Upper lobe of right lung (tissue), 1 donor: ENCODE measurements at regions of chr2 and their contacts with region 1.

Region 1: GRCh38 chr2:68849579-68850030 is 21.6 kb downstream of the BMP10 start:
- DNase-seq: no peak
- ATAC-seq: no peak
- H3K4me3 ChIP-seq: no peak overlapping the region
- H3K27ac ChIP-seq: no peak overlapping the region
- H3K4me1 ChIP-seq: no peaks in the 10 kb centered on the region
- H3K27me3 ChIP-seq: no peaks in the 10 kb centered on the region
- CTCF ChIP-seq: no peak

Region 2: DNA sequence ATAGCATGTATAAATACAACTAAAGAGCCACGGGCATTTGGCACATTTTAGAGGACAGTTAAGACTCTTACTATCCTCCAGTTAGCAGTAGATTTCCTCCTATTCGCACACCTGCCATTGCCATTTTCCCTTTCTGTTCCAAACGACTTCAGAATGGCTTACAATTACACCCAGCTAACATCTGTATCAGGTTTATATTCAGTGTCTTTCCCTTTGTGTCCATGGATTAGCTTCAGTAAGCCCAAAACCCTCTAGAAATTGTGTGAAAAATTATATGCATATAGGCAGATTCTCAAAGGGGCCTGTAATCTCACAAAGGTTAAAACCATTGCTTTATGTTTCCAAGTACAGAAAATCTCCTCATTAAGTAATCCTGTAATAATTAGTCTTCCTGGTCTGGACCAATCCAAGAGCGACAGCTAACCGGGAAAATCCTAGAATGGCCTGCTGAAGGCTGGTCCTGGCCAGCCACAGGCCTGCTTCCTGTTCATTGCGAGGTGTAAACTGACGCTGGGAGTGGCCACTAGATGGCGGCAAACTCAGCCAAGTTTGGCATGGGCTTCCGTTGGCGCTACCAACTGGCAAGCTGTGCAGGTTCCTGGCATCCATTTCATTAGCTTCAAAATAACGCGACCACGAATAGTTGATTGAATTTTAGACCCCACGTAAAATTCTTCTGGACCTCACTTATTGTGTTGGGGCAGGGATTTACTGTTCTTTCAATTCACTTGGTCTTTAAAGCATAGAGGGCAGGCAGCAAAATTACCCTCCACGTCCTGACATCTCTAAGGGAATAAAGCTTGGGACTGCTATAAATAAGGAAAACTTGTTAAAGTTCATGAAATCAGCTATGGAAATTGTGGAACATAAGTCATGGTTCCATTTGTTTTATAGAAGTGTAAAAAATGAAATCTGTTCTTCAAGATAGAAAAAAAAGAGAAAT is 97.9 kb before region 1 on chr2:
- intact Hi-C with region 1: no loop called
- DNase-seq: peak; percentile 94
- ATAC-seq: peak; percentile 98
- H3K4me3 ChIP-seq: no peak overlapping the region
- H3K27ac ChIP-seq: peak overlapping the region; percentile 14
- H3K4me1 ChIP-seq: peaks cover 45% of the 10 kb centered on the region
- H3K27me3 ChIP-seq: no peaks in the 10 kb centered on the region
- CTCF ChIP-seq: peak; percentile 96

Region 3: GRCh38 chr2:68909793-68910674 is 60.4 kb after region 1 on chr2:
- intact Hi-C with region 1: loop called (anchors 10 kb)
- DNase-seq: no peak
- ATAC-seq: peak; percentile 82
- H3K4me3 ChIP-seq: no peak overlapping the region
- H3K27ac ChIP-seq: no peak overlapping the region
- H3K4me1 ChIP-seq: peaks cover 18% of the 10 kb centered on the region
- H3K27me3 ChIP-seq: no peaks in the 10 kb centered on the region
- CTCF ChIP-seq: peak; percentile 93

Region 4: DNA sequence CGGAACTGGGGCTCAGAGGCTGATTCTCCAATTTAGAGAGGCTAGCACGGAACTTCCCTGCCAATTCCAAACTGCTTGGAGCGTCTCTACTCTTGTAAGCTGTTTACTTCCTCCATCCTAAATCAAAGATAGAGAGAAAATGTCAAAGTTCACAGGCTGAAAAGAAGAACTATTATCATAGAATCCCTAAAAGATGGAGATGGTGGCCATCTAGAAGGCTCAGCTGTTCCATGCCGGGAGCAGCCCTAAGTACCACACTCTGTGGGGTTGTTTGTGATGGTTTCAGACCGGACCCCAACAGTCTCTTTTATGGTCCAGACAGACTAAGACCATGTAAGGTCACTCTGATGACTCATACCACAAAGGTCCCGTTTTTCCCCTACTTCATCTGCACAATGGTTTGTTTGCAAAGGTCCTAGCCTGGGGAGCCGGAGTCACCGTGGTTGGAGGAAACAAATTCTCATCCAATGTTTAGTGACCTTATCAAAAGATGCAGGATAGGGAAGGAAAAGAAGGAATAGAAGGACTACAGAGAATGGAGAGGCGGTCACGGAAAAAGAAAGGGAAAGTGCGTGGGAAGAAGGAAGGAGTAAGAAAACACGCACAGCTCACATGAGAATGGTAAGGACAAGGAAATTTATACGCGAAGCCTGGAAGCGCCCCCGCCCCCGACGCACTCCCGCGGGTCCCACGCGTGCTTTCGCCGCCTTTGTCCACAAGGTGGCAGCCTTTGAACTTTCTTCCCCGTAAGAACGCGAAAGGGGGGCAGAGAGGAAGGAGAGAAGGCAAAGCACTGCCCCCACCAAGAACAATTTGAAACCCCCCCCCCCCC is 162.9 kb after region 1 on chr2:
- intact Hi-C with region 1: no loop called
- DNase-seq: peak; percentile 82
- ATAC-seq: peak; percentile 79
- H3K4me3 ChIP-seq: peak overlapping the region; percentile 78
- H3K27ac ChIP-seq: peak overlapping the region; percentile 75
- H3K4me1 ChIP-seq: peaks cover 13% of the 10 kb centered on the region
- H3K27me3 ChIP-seq: no peaks in the 10 kb centered on the region
- CTCF ChIP-seq: peak; percentile 74